ENCODE measurements at regions of chr6 and their contacts with region 1.

Region 1: DNA sequence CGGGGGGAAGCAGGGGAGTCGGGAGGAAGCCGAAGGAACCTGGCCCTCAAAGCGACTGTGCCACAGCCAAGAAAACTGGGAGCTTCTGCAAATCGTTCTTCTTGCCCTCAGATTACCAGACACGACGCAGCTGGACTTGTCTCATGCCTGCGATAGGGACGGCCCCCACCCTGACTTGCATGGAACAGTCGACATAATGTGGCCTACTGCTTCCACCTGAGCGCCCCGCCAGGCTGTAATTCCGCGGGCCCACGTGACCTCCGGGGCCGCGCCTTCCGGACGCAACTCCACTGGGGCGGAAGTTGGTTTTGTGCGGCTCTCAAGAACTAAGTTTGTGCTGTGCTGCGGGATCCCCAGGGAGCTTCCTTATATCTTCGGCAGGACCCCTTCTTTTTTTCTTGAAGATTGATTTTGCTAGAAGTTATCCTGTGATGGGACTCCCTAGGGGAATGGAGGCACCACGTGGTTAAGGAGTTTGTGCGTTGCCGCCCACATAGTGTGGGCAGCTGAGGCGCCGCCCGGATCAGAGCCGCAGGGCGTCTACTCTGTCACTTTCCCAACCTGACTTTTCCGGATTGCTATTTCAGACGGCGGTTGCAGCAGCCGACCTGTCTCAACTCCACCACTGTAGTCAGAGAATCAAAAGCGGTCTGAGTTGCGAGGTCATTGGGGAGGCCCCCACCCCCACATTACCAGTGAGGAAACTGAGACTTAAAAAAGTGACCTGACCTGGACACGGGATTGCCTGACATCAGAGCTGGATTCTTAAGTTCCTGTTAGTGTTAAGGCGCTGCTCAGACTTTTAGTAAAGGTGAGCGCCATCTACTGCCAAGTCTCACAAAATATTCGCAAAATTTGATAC is 540 bp upstream of the CD164 start:
- DNase-seq: peak; percentile 88
- H3K4me3 Mint-ChIP-seq: peak overlapping the region; percentile 89
- H3K27ac Mint-ChIP-seq: peak overlapping the region; percentile 98
- H3K4me1 Mint-ChIP-seq: peaks cover 46% of the 10 kb centered on the region
- H3K27me3 Mint-ChIP-seq: peaks cover 6% of the 10 kb centered on the region

Region 2: DNA sequence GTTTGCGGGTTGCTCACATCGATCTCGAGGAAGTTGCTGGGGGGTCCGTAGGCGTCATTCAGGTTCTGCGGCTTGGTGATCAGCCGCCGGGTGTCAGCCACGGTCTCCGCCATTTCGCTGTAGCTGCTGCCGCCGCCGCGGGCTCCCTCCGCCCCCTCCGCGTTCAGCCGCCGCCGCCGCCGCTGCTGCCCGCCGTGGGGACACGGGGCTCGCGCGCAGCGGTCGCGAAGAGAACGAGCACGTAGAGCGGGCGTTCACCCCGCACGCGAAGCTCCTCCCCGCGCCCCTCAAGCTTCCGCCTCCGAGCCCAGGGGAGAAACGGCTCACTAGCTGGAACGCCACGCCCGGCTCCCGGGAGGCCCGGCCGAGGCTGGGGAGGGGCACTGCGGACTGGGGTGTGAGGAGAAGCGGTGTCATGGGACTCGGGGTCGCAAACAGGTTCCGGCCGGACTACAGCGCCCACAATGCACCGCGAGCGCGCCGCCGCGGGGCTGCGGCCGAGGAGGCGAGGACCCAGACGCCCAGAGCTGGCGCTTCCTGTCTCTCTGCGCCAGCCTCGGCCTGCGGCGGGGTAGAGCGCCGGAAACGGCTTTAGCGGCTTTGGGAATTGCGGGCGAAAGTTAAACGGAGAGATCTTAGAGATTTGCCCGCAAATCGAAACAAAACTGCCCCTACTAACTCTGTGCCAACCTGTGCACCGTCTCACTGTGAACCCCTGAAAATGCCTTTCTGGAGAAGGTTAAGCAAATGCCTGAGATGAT is 1121.8 kb before region 1 on chr6 and contains the start of gene SNX3:
- intact Hi-C with region 1: loop called (anchors 2 kb)
- DNase-seq: peak; percentile 88
- H3K4me3 Mint-ChIP-seq: peak within 1 kb of the TSS; percentile 90
- H3K27ac Mint-ChIP-seq: peak within 1 kb of the TSS; percentile 93
- H3K4me1 Mint-ChIP-seq: peaks cover 12% of the 10 kb centered on the region
- H3K27me3 Mint-ChIP-seq: peaks cover 6% of the 10 kb centered on the region
- total RNA-seq, gene SNX3: 68.5 and 72.5 TPM in 2 replicates

Region 3: GRCh38 chr6:108558372-108559096 is 824.3 kb before region 1 on chr6:
- intact Hi-C with region 1: loop called (anchors 1 kb)
- DNase-seq: peak; percentile 95
- H3K4me3 Mint-ChIP-seq: peak overlapping the region; percentile 88
- H3K27ac Mint-ChIP-seq: peak overlapping the region; percentile 91
- H3K4me1 Mint-ChIP-seq: peaks cover 32% of the 10 kb centered on the region
- H3K27me3 Mint-ChIP-seq: peaks cover 47% of the 10 kb centered on the region

Region 4: GRCh38 chr6:109187399-109188114 is 195.2 kb before region 1 on chr6:
- intact Hi-C with region 1: loop called (anchors 1 kb)
- DNase-seq: peak; percentile 25
- H3K4me3 Mint-ChIP-seq: no peak overlapping the region
- H3K27ac Mint-ChIP-seq: no peak overlapping the region
- H3K4me1 Mint-ChIP-seq: no peaks in the 10 kb centered on the region
- H3K27me3 Mint-ChIP-seq: peaks cover 39% of the 10 kb centered on the region

Region 5: DNA sequence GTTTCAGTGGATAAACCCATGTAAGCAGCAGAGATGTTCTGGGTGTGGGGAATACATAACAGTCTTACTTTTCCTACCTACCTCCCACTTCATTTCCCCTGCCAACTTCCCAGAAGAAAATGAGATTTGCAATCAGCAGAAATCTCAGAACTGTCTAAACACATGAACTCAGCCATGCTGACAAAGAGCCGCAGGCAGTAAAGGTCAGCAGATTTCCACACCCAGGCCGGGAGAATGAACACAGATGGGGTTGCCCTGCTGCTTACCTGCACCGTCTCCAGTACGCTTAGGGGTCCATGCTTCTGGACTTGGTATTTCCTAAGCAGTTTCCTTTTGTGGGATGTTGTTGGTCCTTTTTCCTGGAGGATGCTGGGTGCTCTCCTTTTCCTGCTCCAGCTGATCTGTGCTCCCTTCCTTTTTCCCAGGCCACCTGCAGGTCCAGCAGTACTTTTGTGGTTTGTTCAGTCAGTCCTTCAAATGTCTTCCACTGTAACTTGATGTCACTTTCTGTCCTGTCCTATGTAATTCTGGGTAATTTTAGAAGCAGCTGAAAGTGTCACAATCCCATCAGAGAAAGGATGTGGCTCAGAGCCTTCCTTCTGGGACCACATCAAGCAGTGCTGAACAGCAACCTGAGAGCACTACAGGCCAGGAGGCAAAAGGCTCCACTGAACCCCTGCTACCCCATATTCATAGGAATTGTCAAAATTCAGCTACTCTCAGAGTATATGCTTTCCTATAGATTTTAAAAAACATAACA is 158.5 kb before region 1 on chr6:
- intact Hi-C with region 1: no loop called
- DNase-seq: no peak
- H3K4me3 Mint-ChIP-seq: no peak overlapping the region
- H3K27ac Mint-ChIP-seq: no peak overlapping the region
- H3K4me1 Mint-ChIP-seq: peaks cover 31% of the 10 kb centered on the region
- H3K27me3 Mint-ChIP-seq: peaks cover 6% of the 10 kb centered on the region

Region 6: DNA sequence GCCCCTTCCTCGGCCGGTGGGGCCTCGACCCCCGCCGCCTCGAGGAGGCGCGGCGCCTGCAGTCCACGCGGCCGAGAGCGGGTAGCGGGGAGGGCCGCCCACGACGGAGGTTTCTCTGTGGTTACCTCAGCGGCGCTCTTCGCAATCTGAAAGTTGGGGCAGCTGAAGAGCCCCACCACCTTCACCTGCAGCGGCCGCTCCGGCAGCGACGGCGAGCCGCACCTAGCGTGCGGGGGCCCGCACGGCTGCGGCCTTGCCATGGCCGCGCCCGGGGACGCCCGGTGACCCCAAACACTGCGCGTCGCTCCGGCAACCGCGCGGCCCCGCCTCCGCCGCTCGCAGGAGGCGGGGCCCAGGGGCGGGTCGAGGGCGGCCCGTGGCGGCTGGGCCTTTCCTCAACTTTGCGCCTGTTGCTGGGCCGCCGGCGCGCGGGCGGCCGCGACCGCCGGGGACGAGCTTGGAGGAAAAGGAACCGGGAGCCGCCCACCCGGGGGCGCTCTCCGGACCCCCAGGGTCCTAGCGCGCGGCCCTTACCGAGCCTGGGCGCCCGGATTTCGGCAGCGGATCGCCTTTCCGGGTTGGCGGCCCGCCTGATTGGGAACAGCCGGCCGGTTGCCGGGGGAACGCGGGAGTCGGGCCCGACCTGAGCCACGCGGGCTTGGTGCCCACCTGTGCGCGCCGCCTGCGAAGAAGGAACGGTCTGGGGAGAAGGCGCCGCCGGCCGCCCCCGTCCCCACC is 57.7 kb after region 1 on chr6 and contains the starts of genes PPIL6 and SMPD2:
- intact Hi-C with region 1: loop called (anchors 1 kb)
- DNase-seq: peak; percentile 79
- H3K4me3 Mint-ChIP-seq: peak within 1 kb of the TSS; percentile 88
- H3K27ac Mint-ChIP-seq: peak within 1 kb of the TSS; percentile 91
- H3K4me1 Mint-ChIP-seq: peaks cover 23% of the 10 kb centered on the region
- H3K27me3 Mint-ChIP-seq: peaks cover 5% of the 10 kb centered on the region
- total RNA-seq, gene PPIL6: 0.13 and 0.29 TPM in 2 replicates
- total RNA-seq, gene SMPD2: 18.5 and 19.1 TPM in 2 replicates

Region 7: GRCh38 chr6:109690737-109691621 is 308.2 kb after region 1 on chr6 and contains the starts of genes AK9 and FIG4:
- intact Hi-C with region 1: loop called (anchors 1 kb)
- DNase-seq: peak; percentile 85
- H3K4me3 Mint-ChIP-seq: peak within 1 kb of the TSS; percentile 87
- H3K27ac Mint-ChIP-seq: peak within 1 kb of the TSS; percentile 84
- H3K4me1 Mint-ChIP-seq: peaks cover 47% of the 10 kb centered on the region
- H3K27me3 Mint-ChIP-seq: peaks cover 13% of the 10 kb centered on the region
- total RNA-seq, gene AK9: 2.8 and 3.8 TPM in 2 replicates
- total RNA-seq, gene FIG4: 7.5 and 8.1 TPM in 2 replicates